Activated T-helper 2 cell treated with anti-CD3 and anti-CD28 coated beads, Interferon-gamma antibody, Interleukin-2, Interleukin-4, amounts not matched to agents 10 μg/mL and 5 μg/mL and 100 μg/mL, durations not matched to agents 14 hours and 24 hours and 36 hours (primary cell): ENCODE measurements at regions of chr4 and their contacts with region 1.

Region 1: DNA sequence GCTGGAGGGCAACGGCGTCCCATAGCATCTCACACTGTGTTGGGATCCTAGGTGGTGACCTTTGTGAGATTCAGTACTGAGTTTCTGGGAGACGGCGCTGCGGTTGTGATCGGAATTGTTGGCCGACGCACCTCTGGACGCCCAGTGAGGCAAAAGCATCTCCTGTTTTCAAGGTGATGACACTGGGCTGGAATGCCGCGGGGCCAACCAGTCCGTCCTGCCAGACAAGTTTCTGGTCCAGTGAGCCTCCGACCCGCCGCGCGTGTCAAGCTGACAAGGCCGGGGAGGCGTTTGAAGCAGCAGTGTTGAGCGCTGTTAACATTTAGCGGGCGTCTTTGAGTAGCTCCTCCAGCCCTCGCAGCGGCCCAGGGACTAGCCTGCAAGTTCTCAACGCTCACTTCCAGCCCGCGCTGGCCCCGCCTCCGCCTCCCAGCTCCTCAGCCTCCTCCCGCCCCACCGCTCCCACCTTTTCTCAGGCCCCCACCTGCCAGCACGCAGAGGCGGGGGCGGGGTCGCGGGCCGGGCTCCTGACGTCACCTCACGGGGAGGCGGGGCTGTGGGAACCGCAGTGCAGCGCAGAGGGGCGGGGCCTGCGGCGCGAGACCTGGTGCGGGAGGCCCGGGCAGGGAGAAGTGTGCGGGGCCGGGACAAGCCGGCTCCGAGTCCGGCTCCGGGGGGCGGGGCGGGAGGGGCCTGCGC is 476 bp upstream of the CDS1 start:
- DNase-seq: peak; percentile 77
- H3K4me3 Mint-ChIP-seq: peak overlapping the region; percentile 64
- H3K27ac Mint-ChIP-seq: no peak overlapping the region
- H3K4me1 Mint-ChIP-seq: peaks cover 10% of the 10 kb centered on the region
- H3K27me3 Mint-ChIP-seq: peaks cover 54% of the 10 kb centered on the region

Region 2: DNA sequence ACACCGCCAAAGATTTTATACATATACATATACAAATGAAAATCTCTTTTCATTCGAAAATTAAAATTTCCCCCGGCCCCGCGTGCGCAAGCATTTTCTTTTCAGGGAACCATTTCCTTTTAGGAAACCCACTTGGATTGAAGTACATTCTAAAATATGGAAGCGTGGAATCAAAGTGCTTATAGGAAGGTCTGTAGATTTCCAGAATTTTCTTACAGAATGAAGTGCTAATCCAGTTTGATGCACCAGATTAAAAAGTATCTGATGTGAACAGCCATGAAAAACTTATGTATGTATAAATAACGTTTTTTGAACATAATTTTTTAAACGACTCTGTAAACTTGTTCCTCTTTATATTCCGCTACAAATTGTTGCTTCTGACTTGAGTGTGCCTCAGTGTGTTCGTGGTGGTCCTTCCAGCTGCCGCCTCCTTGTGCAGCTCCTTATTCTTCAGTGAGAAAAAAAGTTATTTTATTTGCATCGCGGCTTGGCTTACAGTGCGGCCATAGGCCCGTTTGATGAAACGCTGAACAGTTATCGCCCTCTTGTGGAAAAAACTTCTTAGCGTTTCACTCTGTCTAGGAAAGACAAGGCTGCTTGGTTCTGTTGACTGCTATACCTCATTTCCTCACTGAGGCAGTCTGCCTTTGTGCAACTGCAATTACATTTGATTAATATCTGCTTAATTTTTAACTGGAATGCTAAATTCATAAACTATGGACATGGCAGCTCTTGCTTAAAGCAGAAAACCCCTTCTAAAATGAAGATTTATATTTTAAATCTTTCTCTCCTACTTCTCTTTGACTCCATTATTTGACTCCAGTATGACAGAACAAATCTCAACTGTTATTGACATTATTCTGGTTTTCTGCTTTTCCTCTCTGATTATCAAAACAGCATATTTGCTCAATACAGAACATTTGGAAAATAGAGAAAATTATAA is 78.7 kb before region 1 on chr4:
- intact Hi-C with region 1: loop called (anchors 2 kb)
- DNase-seq: no peak
- H3K4me3 Mint-ChIP-seq: no peak overlapping the region
- H3K27ac Mint-ChIP-seq: no peak overlapping the region
- H3K4me1 Mint-ChIP-seq: peaks cover 3% of the 10 kb centered on the region
- H3K27me3 Mint-ChIP-seq: peaks cover 75% of the 10 kb centered on the region